ENCODE measurements at regions of chr2 and their contacts with region 1.

Region 1: GRCh38 chr2:161170377-161171310 is 10.4 kb downstream of the TANK start:
- DNase-seq: no peak
- H3K4me3 ChIP-seq: no peak overlapping the region
- H3K27ac ChIP-seq: no peak overlapping the region
- H3K4me1 ChIP-seq: peaks cover 0 to 4% (median under 1%) of the 10 kb centered on the region in 4 experiments; a peak in 1 of 7 replicates
- H3K27me3 ChIP-seq: no peaks in the 10 kb centered on the region
- CTCF ChIP-seq: no peak
- EP300 ChIP-seq: no peak
- POLR2A ChIP-seq: no peak
- RAD21 ChIP-seq: no peak

Region 2: DNA sequence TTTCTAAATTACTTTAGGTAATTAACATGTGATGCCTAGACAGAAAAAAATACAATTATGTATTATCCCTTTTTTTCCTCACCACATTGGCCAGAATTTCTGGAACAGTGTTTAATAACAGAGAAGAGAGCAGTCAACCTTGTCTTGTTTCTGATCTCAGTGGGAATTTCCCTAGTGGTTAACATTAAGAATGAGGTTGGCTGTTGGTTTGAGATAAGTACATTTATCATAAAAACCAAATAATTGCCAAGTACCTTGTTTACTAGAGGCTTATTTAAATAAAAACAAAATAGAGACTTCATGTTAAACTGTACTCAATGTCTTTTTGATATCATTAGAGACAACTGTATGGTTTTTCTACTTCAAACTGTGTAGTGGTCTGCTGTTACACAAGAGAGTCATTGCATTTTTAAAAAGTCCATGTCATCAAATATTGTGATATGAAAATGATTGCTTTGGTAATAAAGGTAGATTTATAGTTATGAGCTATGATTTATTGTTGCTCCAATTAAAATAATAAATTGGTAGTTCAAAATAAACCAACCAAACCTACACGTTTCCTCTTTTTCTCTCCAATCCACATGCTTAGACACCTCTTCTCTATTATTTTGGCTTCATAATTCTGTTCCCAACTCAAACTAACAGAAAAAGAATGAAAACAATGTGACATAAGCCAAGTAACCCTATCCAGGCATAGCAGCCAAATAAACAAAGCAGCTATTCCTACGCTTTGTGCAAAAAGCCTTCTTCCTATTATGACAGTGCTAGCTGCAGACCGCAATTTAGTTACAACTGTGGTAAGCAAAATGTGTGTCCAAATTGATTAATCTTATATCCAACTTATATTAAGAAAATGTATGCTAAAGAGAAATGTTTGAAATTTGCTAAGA is 31.3 kb before region 1 on chr2:
- CTCF ChIA-PET with region 1: no interaction called
- POLR2A ChIA-PET with region 1: no interaction called
- DNase-seq: no peak
- H3K4me3 ChIP-seq: no peak overlapping the region
- H3K27ac ChIP-seq: no peak overlapping the region
- H3K4me1 ChIP-seq: peaks cover 0 to 5% (median 4%) of the 10 kb centered on the region in 4 experiments; a peak in 4 of 7 replicates
- H3K27me3 ChIP-seq: no peaks in the 10 kb centered on the region
- CTCF ChIP-seq: no peak
- EP300 ChIP-seq: no peak
- POLR2A ChIP-seq: no peak
- RAD21 ChIP-seq: no peak

Region 3: DNA sequence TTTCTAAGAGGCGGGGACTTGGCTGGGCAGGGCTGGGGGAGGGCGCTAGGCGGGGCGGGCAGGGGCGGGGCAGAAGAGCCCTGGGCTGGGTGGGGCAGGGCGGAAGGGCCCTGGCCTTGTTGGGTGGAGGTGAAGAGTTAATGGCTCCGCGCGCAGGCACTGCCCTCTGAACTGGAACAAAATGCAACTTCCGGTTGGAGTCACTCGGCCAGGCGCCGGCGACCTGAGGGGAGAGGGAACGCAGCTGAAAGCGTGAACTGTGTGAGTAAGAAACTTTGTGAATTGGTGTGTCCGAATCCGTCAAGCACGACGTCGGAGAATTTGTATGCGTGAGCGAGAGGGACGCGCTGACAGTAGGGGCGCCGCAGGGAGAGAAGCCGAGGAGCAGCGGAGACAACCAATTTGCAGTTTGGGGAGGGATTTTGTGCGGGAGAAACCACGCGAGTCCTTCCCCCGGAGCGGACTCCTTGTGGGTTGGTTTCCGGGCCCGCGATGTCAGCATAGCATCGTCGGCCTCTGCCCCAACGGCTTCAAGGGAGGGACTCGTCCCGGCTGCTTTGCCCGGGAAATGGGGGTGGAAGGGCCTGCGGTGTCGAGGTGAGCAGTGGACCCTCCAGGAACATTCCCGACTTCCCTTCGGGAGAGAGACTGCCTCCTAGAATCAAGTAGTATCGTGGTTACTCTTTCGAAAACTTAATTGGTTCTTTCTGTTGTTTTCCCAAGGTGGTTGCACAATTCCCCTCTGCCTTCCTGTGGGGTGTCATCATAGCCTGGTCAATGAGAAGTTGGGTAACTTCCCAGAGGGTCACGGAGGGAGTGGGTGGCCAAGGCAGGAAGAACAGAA is 10.2 kb before region 1 on chr2 and contains the start of gene TANK:
- CTCF ChIA-PET with region 1: no interaction called
- POLR2A ChIA-PET with region 1: interaction called, 11 read pairs
- DNase-seq: peak; percentile 86 to 88
- H3K4me3 ChIP-seq: peak within 1 kb of the TSS; percentile 89 to 97 (median 94)
- H3K27ac ChIP-seq: peak within 1 kb of the TSS; percentile 69
- H3K4me1 ChIP-seq: no peaks in the 10 kb centered on the region; a peak in 1 of 7 replicates
- H3K27me3 ChIP-seq: no peaks in the 10 kb centered on the region
- CTCF ChIP-seq: no peak
- EP300 ChIP-seq: no peak
- POLR2A ChIP-seq: peak; percentile 97 to 98
- RAD21 ChIP-seq: no peak
- total RNA-seq, gene TANK: 19.7 and 26.1 TPM in 2 replicates

Region 4: DNA sequence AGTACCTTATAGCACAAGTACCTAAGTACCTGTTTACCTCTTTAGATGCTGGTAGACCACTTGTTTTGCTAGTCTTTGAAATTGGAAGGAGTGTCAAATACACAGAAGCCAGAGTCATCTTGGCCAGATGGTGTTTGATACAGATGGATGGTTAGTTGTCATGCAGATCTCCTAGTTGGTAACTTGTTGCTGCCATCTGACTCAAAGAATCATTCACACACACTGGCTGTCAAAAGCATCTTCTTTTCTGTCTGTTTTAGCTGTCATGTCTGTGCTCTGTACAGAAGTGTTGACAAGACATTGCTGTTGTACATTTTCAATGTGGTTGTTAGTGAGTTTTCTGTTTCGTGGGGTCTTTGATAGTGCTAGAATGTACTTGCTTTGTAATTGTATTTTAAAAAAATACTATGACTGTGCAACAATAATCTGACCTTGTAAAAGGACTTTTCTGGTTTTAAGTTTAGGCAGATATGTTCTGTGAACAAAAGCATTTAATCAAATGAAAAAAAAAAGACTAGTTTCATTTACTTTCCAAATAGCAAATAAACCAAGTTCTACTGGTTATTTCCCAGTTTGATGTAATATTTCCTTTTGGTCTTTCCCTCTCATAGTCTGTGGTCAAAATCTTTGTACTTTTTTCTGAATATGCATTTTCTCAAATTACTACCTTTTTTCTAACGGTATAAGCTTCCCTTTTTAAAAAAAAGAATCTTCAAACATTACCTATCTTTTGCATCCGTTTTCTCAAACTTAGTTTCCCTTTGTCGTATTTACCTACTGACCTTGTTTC is 29.5 kb after region 1 on chr2:
- CTCF ChIA-PET with region 1: no interaction called
- POLR2A ChIA-PET with region 1: no interaction called
- DNase-seq: no peak
- H3K4me3 ChIP-seq: no peak overlapping the region
- H3K27ac ChIP-seq: no peak overlapping the region
- H3K4me1 ChIP-seq: no peaks in the 10 kb centered on the region
- H3K27me3 ChIP-seq: no peaks in the 10 kb centered on the region
- CTCF ChIP-seq: no peak
- EP300 ChIP-seq: no peak
- POLR2A ChIP-seq: no peak
- RAD21 ChIP-seq: no peak

Region 5: DNA sequence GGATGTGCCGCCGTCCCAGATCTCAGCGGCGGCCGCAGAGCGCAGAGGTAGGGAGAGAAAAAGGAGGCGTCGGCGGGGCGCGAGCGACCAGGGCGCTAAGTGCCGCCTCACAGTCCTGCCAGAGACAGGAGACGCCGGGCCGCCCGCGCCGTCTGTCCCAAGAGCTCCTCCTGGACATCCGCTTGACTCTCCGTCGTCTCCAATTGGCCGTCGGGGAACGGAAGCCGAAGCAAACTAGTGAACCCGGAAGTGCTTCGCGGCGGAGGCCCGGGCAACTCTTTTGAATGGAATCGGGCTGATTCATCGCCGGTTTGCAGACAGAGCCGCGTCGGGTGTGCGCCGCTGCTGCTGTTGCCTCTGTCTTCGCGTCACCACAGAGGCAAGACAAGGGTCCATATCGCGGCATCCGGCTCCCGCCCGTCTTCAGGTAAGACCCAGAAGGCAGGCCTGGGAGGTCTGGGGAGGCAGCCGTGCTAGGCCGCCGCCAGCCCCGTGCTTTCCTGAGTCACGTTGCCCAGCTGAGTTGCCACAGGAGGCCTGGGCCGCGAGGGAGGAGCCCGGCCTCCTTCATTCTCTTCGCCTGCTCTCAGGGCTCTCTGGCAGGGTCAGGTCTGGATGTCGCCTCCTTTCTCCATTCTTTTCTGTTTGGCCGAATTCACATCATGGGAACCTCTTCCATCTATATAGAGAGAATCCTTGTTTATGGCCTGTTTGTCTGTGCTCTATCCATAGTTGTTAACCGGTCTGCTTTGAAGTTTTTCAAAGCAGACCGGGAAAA is 137.7 kb after region 1 on chr2 and contains the start of gene PSMD14:
- CTCF ChIA-PET with region 1: no interaction called
- POLR2A ChIA-PET with region 1: no interaction called
- DNase-seq: peak; percentile 78 to 86
- H3K4me3 ChIP-seq: peak within 1 kb of the TSS; percentile 74 to 91 (median 87)
- H3K27ac ChIP-seq: peak within 1 kb of the TSS; percentile 93
- H3K4me1 ChIP-seq: peaks cover 0 to 3% (median 0%) of the 10 kb centered on the region in 4 experiments; a peak in 2 of 7 replicates
- H3K27me3 ChIP-seq: no peaks in the 10 kb centered on the region; a peak in 1 of 7 replicates
- CTCF ChIP-seq: no peak
- EP300 ChIP-seq: peak in 1 of 2 experiments; percentile 51; a peak in 1 of 3 replicates
- POLR2A ChIP-seq: peak in 1 of 2 experiments; percentile 93; a peak in 2 of 3 replicates
- RAD21 ChIP-seq: no peak
- total RNA-seq, gene PSMD14: 84.1 and 88.7 TPM in 2 replicates

Region 6: GRCh38 chr2:161384864-161385263 is 214.2 kb after region 1 on chr2:
- CTCF ChIA-PET with region 1: no interaction called
- POLR2A ChIA-PET with region 1: no interaction called
- DNase-seq: no peak
- H3K4me3 ChIP-seq: no peak overlapping the region
- H3K27ac ChIP-seq: no peak overlapping the region
- H3K4me1 ChIP-seq: no peaks in the 10 kb centered on the region
- H3K27me3 ChIP-seq: no peaks in the 10 kb centered on the region
- CTCF ChIP-seq: no peak
- EP300 ChIP-seq: no peak
- POLR2A ChIP-seq: no peak
- RAD21 ChIP-seq: no peak